GM12878 (cell line): ENCODE measurements at regions of chr4 and their contacts with region 1.

Region 1: GRCh38 chr4:80184053-80184790 is 13.1 kb upstream of the PRDM8 start:
- DNase-seq: no peak
- ATAC-seq: peak; percentile 98
- H3K4me3 ChIP-seq: peak overlapping the region; percentile 87
- H3K27ac ChIP-seq: no peak overlapping the region
- H3K4me1 ChIP-seq: peaks cover 8% of the 10 kb centered on the region
- H3K27me3 ChIP-seq: peaks cover 8 to 10% of the 10 kb centered on the region in 2 experiments
- CTCF ChIP-seq: peak; percentile 85 to 87 (median 86)
- EP300 ChIP-seq: no peak
- POLR2A ChIP-seq: no peak
- RAD21 ChIP-seq: peak; percentile 64

Region 2: DNA sequence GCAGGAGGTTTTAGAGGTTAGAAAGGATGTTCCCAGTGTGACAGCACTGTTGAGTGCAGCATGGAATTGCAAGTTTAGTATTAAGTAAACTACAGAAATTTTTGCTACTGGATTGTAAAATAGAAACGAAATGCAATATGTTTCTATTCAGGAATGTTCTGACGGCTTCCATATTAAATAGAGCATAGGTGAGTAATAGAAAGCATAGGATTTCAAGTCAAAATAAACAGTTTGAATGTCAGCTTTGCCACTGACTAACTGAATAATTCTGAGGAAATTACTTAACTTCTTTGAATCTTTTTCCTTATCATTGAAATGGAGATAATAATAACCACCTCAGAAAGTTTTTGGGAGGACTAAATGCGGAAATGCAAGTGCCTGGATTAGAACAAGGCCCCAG is 444.3 kb before region 1 on chr4:
- CTCF ChIA-PET with region 1: no interaction called
- POLR2A ChIA-PET with region 1: no interaction called
- RAD21 ChIA-PET with region 1: no interaction called
- SMC1A ChIA-PET with region 1: no interaction called
- in situ Hi-C with region 1: no loop called
- intact Hi-C with region 1: no loop called
- DNase-seq: no peak
- ATAC-seq: no peak
- H3K4me3 ChIP-seq: no peak overlapping the region
- H3K27ac ChIP-seq: no peak overlapping the region
- H3K4me1 ChIP-seq: no peaks in the 10 kb centered on the region
- H3K27me3 ChIP-seq: no peaks in the 10 kb centered on the region
- CTCF ChIP-seq: no peak
- EP300 ChIP-seq: no peak
- POLR2A ChIP-seq: no peak
- RAD21 ChIP-seq: no peak

Region 3: GRCh38 chr4:79820427-79820826 is 363.8 kb before region 1 on chr4:
- CTCF ChIA-PET with region 1: no interaction called
- POLR2A ChIA-PET with region 1: no interaction called
- RAD21 ChIA-PET with region 1: no interaction called
- SMC1A ChIA-PET with region 1: no interaction called
- in situ Hi-C with region 1: no loop called
- intact Hi-C with region 1: no loop called
- DNase-seq: no peak
- ATAC-seq: peak; percentile 61
- H3K4me3 ChIP-seq: no peak overlapping the region
- H3K27ac ChIP-seq: no peak overlapping the region
- H3K4me1 ChIP-seq: no peaks in the 10 kb centered on the region
- H3K27me3 ChIP-seq: no peaks in the 10 kb centered on the region
- CTCF ChIP-seq: no peak
- EP300 ChIP-seq: no peak
- POLR2A ChIP-seq: no peak
- RAD21 ChIP-seq: no peak

Region 4: DNA sequence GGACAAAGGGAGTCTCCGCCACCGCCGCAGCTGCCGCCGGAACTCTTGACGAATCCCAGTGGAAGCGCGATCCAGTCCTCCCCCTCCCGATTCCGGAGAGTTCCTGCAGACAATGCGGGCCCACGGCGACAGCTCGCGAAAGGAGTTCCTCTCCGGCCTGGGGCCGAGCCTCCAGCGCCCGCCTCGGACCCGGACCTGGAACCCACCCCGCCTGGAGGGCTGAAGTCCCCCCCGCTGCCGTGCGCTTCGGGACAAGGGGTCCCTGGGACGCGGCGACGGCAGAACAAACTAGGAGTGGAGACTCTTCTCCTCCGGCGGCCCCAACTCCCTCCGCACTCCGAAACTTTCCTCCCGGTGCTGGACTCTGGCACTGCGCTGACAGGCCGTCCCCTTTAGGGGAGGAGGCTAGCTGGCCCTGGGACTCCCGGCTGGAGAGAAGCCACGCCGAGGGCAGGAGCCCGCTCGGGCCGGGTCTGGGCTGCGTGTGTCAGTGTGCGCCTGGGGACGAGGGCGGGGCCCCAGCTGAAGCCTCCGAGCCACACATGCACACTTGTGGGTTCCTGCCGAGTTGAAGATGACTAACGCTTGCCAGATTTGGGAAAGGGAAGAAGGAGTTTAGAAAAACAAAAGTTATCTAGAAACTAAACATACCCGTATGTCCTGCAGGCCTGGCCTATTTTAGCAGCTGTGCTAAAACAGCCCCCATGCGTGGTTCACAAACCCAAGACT is 111.3 kb before region 1 on chr4 and contains the start of gene ANTXR2:
- CTCF ChIA-PET with region 1: interaction called, 3 read pairs
- POLR2A ChIA-PET with region 1: interaction called, 3 read pairs
- RAD21 ChIA-PET with region 1: interaction called, 6 read pairs
- SMC1A ChIA-PET with region 1: interaction called, 5 read pairs
- in situ Hi-C with region 1: no loop called
- intact Hi-C with region 1: loop called (anchors 2 kb)
- DNase-seq: peak; percentile 41
- ATAC-seq: peak; percentile 81
- H3K4me3 ChIP-seq: peak within 1 kb of the TSS; percentile 95
- H3K27ac ChIP-seq: peak within 1 kb of the TSS; percentile 70
- H3K4me1 ChIP-seq: peaks cover 48% of the 10 kb centered on the region
- H3K27me3 ChIP-seq: no peaks in the 10 kb centered on the region
- CTCF ChIP-seq: no peak
- EP300 ChIP-seq: 0 out of 4 replicates have a peak, but pooled peaks of 1 of the 2 experiments have one; percentile 7
- POLR2A ChIP-seq: peak; percentile 69
- RAD21 ChIP-seq: no peak
- polyA plus RNA-seq, gene ANTXR2: 1.4 to 1.5 TPM

Region 5: GRCh38 chr4:80138551-80139538 is 45.4 kb before region 1 on chr4:
- CTCF ChIA-PET with region 1: interaction called, 9 read pairs
- POLR2A ChIA-PET with region 1: no interaction called
- RAD21 ChIA-PET with region 1: interaction called, 3 read pairs
- SMC1A ChIA-PET with region 1: interaction called, 17 read pairs
- in situ Hi-C with region 1: no loop called
- intact Hi-C with region 1: no loop called
- DNase-seq: peak; percentile 12
- ATAC-seq: peak; percentile 90
- H3K4me3 ChIP-seq: no peak overlapping the region
- H3K27ac ChIP-seq: no peak overlapping the region
- H3K4me1 ChIP-seq: peaks cover 3% of the 10 kb centered on the region; the same call in 1 of the 2 replicates
- H3K27me3 ChIP-seq: no peaks in the 10 kb centered on the region
- CTCF ChIP-seq: no peak
- EP300 ChIP-seq: no peak
- POLR2A ChIP-seq: no peak
- RAD21 ChIP-seq: no peak

Region 6: GRCh38 chr4:80202190-80202711 is 18.0 kb after region 1 on chr4:
- CTCF ChIA-PET with region 1: interaction called, 16 read pairs
- POLR2A ChIA-PET with region 1: no interaction called
- RAD21 ChIA-PET with region 1: interaction called, 4 read pairs
- SMC1A ChIA-PET with region 1: interaction called, 3 read pairs
- in situ Hi-C with region 1: no loop called
- intact Hi-C with region 1: no loop called
- DNase-seq: no peak
- ATAC-seq: peak; percentile 85
- H3K4me3 ChIP-seq: peak overlapping the region; percentile 71
- H3K27ac ChIP-seq: no peak overlapping the region
- H3K4me1 ChIP-seq: 0 out of 2 replicates have a peak, but pooled peaks cover 3% of the 10 kb centered on the region
- H3K27me3 ChIP-seq: peaks cover 0 to 13% of the 10 kb centered on the region in 2 experiments; a peak in 3 of 4 replicates
- CTCF ChIP-seq: peak; percentile 65 to 81 (median 66)
- EP300 ChIP-seq: no peak
- POLR2A ChIP-seq: no peak
- RAD21 ChIP-seq: peak; percentile 25; the same call in 1 of the 2 replicates

Region 7: DNA sequence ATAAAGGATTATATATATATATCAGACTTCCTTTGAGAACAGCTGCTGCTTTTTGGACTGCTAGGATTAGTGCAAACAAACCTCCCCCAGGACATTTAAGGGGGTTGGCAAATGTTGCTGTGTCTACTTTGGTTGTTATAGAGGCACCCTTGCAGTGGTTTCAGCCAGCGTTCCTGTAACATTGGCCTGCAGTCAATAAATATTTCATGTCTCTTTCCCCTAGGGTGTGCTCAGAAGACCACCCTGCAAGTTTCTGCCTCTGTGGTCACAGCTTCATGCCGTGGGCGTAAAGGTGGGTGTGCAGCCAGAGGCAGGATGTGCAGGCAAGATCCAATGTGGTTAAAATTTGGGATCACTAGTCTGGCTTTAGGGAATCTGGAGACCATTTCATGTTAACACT is 111.1 kb after region 1 on chr4:
- CTCF ChIA-PET with region 1: no interaction called
- POLR2A ChIA-PET with region 1: no interaction called
- RAD21 ChIA-PET with region 1: no interaction called
- SMC1A ChIA-PET with region 1: no interaction called
- in situ Hi-C with region 1: no loop called
- intact Hi-C with region 1: no loop called
- DNase-seq: no peak
- ATAC-seq: no peak
- H3K4me3 ChIP-seq: no peak overlapping the region
- H3K27ac ChIP-seq: no peak overlapping the region
- H3K4me1 ChIP-seq: no peaks in the 10 kb centered on the region
- H3K27me3 ChIP-seq: no peaks in the 10 kb centered on the region
- CTCF ChIP-seq: no peak
- EP300 ChIP-seq: no peak
- POLR2A ChIP-seq: no peak
- RAD21 ChIP-seq: no peak

Region 8: DNA sequence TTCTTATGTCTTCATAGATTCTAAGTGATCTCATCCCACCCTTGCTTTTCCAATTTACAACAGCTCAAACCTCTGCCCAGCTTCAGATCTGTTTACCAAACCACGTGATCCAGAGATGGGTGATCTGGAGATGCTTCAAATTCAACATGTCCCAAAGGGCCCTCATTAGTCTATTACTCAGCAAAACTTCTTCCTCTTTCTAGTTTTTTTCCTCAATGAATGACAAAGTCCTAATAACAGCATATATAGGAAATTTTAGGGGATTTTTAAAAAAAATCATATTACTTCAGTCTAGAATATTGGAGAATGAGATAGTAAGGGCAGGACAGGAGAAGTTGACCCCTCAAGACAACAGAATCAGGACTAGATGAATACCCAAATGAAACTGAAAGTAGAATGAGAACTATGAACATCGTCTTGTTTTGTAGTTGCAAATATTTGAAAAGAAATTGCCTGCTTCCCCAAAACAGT is 278.4 kb after region 1 on chr4:
- CTCF ChIA-PET with region 1: no interaction called
- POLR2A ChIA-PET with region 1: no interaction called
- RAD21 ChIA-PET with region 1: no interaction called
- SMC1A ChIA-PET with region 1: no interaction called
- in situ Hi-C with region 1: no loop called
- intact Hi-C with region 1: no loop called
- DNase-seq: peak; percentile 5
- ATAC-seq: peak; percentile 78
- H3K4me3 ChIP-seq: no peak overlapping the region
- H3K27ac ChIP-seq: no peak overlapping the region
- H3K4me1 ChIP-seq: no peaks in the 10 kb centered on the region
- H3K27me3 ChIP-seq: no peaks in the 10 kb centered on the region
- CTCF ChIP-seq: no peak
- EP300 ChIP-seq: no peak
- POLR2A ChIP-seq: no peak
- RAD21 ChIP-seq: no peak